ENCODE measurements at regions of chr11 and their contacts with region 1.

Region 1: GRCh38 chr11:76919887-76920746 is 59.4 kb downstream of the ACER3 start:
- DNase-seq: peak; percentile 66
- H3K4me3 ChIP-seq: peak overlapping the region; percentile 12 to 41; a peak in 3 of 4 replicates
- H3K27ac ChIP-seq: no peak overlapping the region
- H3K4me1 ChIP-seq: peaks cover 3 to 9% of the 10 kb centered on the region in 2 experiments; a peak in 2 of 4 replicates
- H3K27me3 ChIP-seq: no peaks in the 10 kb centered on the region
- CTCF ChIP-seq: peak; percentile 97
- EP300 ChIP-seq: no peak
- RAD21 ChIP-seq: peak; percentile 79

Region 2: GRCh38 chr11:76436020-76436419 is 484.1 kb before region 1 on chr11:
- CTCF ChIA-PET with region 1: no interaction called
- POLR2A ChIA-PET with region 1: no interaction called
- DNase-seq: no peak
- H3K4me3 ChIP-seq: no peak overlapping the region
- H3K27ac ChIP-seq: no peak overlapping the region
- H3K4me1 ChIP-seq: no peaks in the 10 kb centered on the region; a peak in 1 of 4 replicates
- H3K27me3 ChIP-seq: no peaks in the 10 kb centered on the region
- CTCF ChIP-seq: no peak
- EP300 ChIP-seq: no peak
- RAD21 ChIP-seq: no peak

Region 3: DNA sequence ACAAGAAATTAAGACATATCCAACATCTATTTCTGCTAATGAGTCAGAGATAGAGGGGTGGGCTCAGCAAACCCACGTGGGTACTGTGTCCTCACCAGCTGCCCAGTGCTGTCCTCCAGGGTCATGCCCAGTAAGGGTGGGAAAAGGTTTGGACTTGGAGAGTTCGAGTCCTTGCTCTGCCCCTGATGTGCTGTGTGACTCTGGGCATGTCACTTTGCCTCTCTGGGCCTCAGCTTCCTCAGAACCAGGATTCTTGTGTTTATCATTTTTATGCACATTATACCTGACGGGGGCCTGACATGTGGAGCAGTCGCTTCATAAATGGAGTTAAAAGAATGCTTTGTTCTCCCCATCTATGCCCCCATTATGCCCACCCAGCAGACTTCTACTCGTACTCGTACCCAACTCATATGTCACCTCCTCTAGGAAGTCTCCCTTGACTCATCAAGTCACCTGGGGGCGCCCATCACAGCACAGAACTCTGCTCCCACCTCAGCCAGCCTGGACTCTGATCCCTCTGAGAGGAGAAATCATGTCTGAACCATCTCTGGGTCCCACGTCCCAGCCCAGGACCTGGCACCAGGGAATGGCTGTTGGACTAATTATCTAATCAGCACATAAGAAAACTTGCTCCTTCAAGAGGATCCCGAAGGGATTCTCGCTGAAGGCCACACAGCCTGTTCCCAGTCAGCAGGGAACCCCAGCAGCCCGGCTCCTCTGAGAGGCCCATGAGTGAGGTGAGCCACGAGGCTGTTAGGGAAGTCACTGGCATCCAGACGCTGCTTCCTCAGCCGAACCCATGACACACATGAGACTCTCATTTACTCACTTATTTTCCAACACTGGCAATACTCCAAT is 175.7 kb before region 1 on chr11:
- CTCF ChIA-PET with region 1: interaction called, 23 read pairs
- POLR2A ChIA-PET with region 1: no interaction called
- DNase-seq: peak; percentile 32
- H3K4me3 ChIP-seq: no peak overlapping the region
- H3K27ac ChIP-seq: no peak overlapping the region
- H3K4me1 ChIP-seq: peaks cover 0 to 17% of the 10 kb centered on the region in 2 experiments; a peak in 1 of 4 replicates
- H3K27me3 ChIP-seq: no peaks in the 10 kb centered on the region
- CTCF ChIP-seq: no peak
- EP300 ChIP-seq: no peak
- RAD21 ChIP-seq: no peak

Region 4: DNA sequence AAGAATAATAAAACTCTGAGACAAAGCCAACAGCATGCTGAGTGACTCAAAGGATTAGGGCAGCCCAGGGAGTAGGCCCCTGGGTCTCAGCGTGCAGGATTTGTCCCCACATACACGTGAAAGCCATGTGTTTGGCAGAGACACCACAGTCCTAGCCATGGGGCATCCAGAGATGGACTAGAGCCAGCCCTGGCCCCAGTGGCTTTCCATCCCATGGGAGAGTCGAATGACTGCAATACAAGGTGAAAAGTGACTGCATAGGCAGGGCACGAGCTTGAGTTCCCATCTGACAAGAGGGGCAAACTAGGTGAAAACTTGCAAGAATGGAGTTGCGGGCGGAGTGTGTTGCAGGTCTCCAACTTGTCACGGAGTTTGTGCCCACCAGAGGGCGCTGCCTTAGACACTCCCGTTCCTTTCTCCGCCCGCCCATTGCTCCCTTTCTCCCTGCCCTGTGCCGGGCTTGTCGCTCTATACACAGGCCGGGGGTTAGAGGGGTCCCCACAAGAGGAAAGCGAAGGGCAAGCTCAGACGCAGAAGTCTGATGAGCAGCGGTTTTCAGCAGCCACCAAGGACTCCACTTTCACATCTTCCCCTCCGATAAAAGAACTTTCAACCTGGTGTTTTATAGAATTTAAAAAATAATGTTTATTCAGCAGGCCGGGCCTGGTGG is 112.8 kb before region 1 on chr11:
- CTCF ChIA-PET with region 1: interaction called, 216 read pairs
- POLR2A ChIA-PET with region 1: no interaction called
- DNase-seq: peak; percentile 83
- H3K4me3 ChIP-seq: no peak overlapping the region; a peak in 1 of 4 replicates
- H3K27ac ChIP-seq: no peak overlapping the region
- H3K4me1 ChIP-seq: peaks cover 0 to 9% of the 10 kb centered on the region in 2 experiments; a peak in 1 of 4 replicates
- H3K27me3 ChIP-seq: no peaks in the 10 kb centered on the region
- CTCF ChIP-seq: peak; percentile 78
- EP300 ChIP-seq: no peak
- RAD21 ChIP-seq: peak; percentile 51

Region 5: DNA sequence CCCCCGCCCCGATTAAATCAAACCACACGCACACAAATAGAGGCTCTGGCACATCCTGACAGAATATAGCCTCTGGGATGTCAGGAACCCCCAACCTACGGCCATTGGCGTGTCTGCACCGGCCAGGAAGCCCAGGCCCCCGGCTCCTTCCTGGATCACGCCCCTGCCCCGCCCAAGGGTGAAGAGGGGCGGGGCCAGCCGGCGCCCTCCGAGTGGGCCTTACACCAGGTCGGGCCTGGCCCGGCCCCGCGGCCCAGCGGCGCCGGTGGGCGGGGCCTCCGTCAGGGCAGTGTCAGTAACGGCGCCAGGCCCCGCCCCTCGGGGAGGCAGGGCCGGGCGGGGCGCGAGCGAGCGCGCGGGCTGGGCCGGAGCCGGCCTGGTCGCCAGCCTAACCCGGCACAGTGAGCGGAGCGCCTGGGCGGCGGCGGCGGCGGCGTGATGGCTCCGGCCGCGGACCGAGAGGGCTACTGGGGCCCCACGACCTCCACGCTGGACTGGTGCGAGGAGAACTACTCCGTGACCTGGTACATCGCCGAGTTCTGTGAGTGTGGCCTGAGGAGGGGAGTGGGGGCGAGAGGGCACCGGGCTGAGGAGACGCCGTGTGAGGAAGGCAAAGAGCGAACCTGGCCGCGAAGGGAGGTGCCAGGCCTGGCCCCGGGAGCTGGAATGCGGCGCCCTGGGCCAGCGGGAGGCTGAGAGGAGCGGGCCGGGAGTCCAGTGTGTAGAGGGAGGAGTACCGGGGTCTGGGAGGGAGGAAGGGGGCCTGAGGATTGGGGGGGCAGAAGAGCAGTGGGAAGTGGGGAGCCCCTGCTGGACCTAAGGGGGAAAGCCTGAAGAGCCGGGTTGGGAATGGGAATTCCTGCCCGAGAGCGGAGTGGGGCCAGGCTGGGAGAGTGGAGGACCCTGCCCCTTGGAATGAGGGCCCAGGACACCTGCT is 59.3 kb before region 1 on chr11 and contains the start of gene ACER3:
- CTCF ChIA-PET with region 1: interaction called, 19 read pairs
- POLR2A ChIA-PET with region 1: no interaction called
- DNase-seq: peak; percentile 99
- H3K4me3 ChIP-seq: peak within 1 kb of the TSS; percentile 64 to 80
- H3K27ac ChIP-seq: peak within 1 kb of the TSS; percentile 67 to 70
- H3K4me1 ChIP-seq: peaks cover 7 to 10% of the 10 kb centered on the region in 2 experiments; a peak in 3 of 4 replicates
- H3K27me3 ChIP-seq: no peaks in the 10 kb centered on the region
- CTCF ChIP-seq: peak; percentile 34
- EP300 ChIP-seq: no peak; a peak in 1 of 4 replicates
- RAD21 ChIP-seq: peak; percentile 26; the same call in 1 of the 2 replicates
- polyA plus RNA-seq, gene ACER3: 5.4 and 6.3 TPM in 2 replicates

Region 6: GRCh38 chr11:76947800-76948199 is 27.7 kb after region 1 on chr11:
- CTCF ChIA-PET with region 1: interaction called, 16 read pairs
- POLR2A ChIA-PET with region 1: no interaction called
- DNase-seq: peak; percentile 14
- H3K4me3 ChIP-seq: no peak overlapping the region
- H3K27ac ChIP-seq: no peak overlapping the region
- H3K4me1 ChIP-seq: peaks cover 0 to 5% of the 10 kb centered on the region in 2 experiments; a peak in 2 of 4 replicates
- H3K27me3 ChIP-seq: no peaks in the 10 kb centered on the region
- CTCF ChIP-seq: no peak
- EP300 ChIP-seq: no peak
- RAD21 ChIP-seq: no peak

Region 7: GRCh38 chr11:77091146-77091940 is 171.2 kb after region 1 on chr11:
- CTCF ChIA-PET with region 1: interaction called, 20 read pairs
- POLR2A ChIA-PET with region 1: no interaction called
- DNase-seq: peak; percentile 93
- H3K4me3 ChIP-seq: no peak overlapping the region; a peak in 1 of 4 replicates
- H3K27ac ChIP-seq: no peak overlapping the region
- H3K4me1 ChIP-seq: peaks cover 0 to 21% of the 10 kb centered on the region in 2 experiments; a peak in 1 of 4 replicates
- H3K27me3 ChIP-seq: no peaks in the 10 kb centered on the region
- CTCF ChIP-seq: peak; percentile 89
- EP300 ChIP-seq: no peak
- RAD21 ChIP-seq: peak; percentile 95

Region 8: DNA sequence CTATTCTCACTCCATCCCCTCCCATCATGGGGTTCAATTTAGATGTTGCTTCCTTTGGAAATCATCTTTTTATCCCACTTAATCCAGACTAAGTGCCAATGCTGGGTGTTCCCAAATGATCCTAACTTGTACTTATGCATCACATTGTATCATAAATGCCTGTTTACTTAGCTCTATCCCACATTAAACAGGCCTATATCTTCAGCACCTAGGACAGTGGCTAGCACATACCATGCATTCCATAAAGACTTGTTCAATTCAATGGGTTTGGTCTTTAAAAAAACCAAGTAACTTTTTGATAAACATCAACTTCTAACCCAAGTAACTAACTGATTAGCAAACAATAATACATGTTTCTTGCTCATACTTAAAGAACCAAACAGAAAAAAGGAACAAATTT is 859.8 kb after region 1 on chr11:
- CTCF ChIA-PET with region 1: no interaction called
- POLR2A ChIA-PET with region 1: no interaction called
- DNase-seq: no peak
- H3K4me3 ChIP-seq: no peak overlapping the region
- H3K27ac ChIP-seq: no peak overlapping the region
- H3K4me1 ChIP-seq: no peaks in the 10 kb centered on the region
- H3K27me3 ChIP-seq: no peaks in the 10 kb centered on the region
- CTCF ChIP-seq: no peak
- EP300 ChIP-seq: no peak
- RAD21 ChIP-seq: no peak

Measured in SK-N-SH (cell line).